Posterior cingulate gyrus (tissue), 11 donors: ENCODE measurements at regions of chr3 and their contacts with region 1.

Region 1: DNA sequence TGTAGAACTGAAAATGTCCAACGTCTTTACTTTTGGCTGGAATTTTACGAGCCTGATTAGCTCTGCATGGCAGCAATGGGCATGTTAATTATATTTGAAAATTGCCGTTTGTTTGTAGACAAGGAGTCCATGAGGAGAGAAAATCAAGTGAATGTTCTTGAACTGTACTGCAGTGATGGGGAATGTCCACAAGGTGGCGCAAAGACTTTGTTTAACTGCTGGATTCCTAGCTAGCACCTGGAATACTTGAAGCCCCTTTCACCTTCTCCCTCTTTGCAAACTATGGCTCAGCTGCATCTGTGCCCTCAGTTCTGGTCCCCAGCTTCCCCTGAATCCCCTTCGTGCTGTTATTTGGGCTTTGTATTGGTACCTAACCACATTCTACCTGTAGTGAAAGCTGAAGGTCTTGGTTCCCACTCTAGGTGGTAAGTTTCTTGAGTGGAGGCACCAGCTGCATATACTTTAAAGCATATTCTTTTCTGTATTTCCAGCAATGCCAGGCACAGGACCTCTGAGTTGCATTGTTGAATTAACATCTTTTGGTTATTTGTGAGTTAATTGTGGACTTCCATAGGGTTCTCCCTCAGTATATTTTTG is 25.3 kb downstream of the EXOG start:
- DNase-seq: peak in 6 of 10 donors; percentile 65 to 87 (median 72)

Region 2: DNA sequence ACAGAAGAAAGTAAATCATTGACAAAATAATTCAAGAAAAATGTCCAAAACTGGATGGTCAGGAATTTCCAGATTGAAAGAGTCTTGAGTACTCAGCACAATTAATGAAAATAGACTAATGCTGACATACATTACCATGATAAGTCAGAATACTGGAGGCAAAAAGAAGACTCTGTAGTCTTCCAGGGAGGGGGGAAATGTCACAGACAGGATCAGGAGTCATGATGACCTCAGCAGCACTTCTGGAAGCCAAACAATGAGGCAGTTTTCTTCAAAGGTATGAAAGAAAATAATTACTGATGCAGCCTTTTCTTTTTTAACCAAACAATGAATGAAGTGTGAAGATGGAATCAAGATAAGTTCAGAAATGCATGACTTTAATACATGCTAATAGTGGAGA is 286.0 kb before region 1 on chr3:
- intact Hi-C with region 1: no loop called
- DNase-seq: no peak

Region 3: GRCh38 chr3:38651154-38651789 is 129.8 kb after region 1 on chr3:
- intact Hi-C with region 1: loop called (anchors 1 kb)
- DNase-seq: peak in 5 of 10 donors; percentile 45 to 68 (median 54)

Region 4: DNA sequence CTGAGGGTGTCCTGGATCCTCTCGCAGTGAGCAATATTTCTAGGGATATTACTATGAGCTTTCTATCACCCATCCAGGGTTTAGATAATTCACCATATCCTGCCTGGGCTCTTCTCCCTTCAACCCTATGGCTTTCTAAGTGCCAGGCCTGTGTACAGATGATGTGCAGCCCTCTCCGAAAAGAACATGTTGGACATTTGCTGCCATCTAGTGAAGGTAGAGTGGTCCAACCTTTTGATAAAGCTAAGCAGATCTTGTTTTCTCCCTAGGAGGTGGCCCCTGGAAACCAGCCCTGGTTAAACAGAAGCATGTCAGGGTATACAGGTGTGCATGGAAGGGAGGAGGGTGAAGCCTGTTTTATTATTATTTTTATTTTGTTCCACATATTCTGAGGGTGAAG is 322.4 kb after region 1 on chr3:
- intact Hi-C with region 1: loop called (anchors 2 kb)
- DNase-seq: no peak

Region 5: GRCh38 chr3:39398700-39399099 is 877.2 kb after region 1 on chr3:
- intact Hi-C with region 1: no loop called
- DNase-seq: no peak